ENCODE measurements at regions of chr19 and their contacts with region 1.

Region 1: GRCh38 chr19:14405758-14406644 is 13.1 kb downstream of the DDX39A start:
- DNase-seq: peak; percentile 89
- ATAC-seq: peak; percentile 67
- H3K4me3 ChIP-seq: no peak overlapping the region
- H3K27ac ChIP-seq: no peak overlapping the region
- H3K4me1 ChIP-seq: peaks cover 4% of the 10 kb centered on the region; the same call in 1 of the 2 replicates
- H3K27me3 ChIP-seq: no peaks in the 10 kb centered on the region
- CTCF ChIP-seq: peak; percentile 60

Region 2: GRCh38 chr19:14366498-14366915 is 39.5 kb before region 1 on chr19:
- CTCF ChIA-PET with region 1: interaction called, 9 read pairs
- POLR2A ChIA-PET with region 1: no interaction called
- intact Hi-C with region 1: loop called (anchors 5 kb)
- DNase-seq: peak; percentile 98
- ATAC-seq: peak; percentile 85
- H3K4me3 ChIP-seq: peak overlapping the region; percentile 37; the same call in 1 of the 2 replicates
- H3K27ac ChIP-seq: no peak overlapping the region
- H3K4me1 ChIP-seq: peaks cover 8% of the 10 kb centered on the region
- H3K27me3 ChIP-seq: no peaks in the 10 kb centered on the region
- CTCF ChIP-seq: no peak

Measured in PC-3 (cell line).